Activated CD8-positive, alpha-beta memory T cell treated with anti-CD3 and anti-CD28 coated beads, Interleukin-2, amount 10 ng/mL, durations not matched to agents 7 days and 5 days (primary cell): ENCODE measurements at regions of chr19 and their contacts with region 1.

Region 1: GRCh38 chr19:40806488-40807468 is 7.8 kb downstream of the EGLN2 start:
- DNase-seq: peak; percentile 87
- ATAC-seq: peak; percentile 54
- H3K4me3 Mint-ChIP-seq: peak overlapping the region; percentile 31
- H3K27ac Mint-ChIP-seq: peak overlapping the region; percentile 89
- H3K4me1 Mint-ChIP-seq: peaks cover 83% of the 10 kb centered on the region
- H3K27me3 Mint-ChIP-seq: peaks cover 4% of the 10 kb centered on the region

Region 2: GRCh38 chr19:40662921-40663694 is 143.7 kb before region 1 on chr19:
- CTCF ChIA-PET with region 1: interaction called, 20 read pairs
- DNase-seq: peak; percentile 92
- ATAC-seq: peak; percentile 92
- H3K4me3 Mint-ChIP-seq: peak overlapping the region; percentile 72
- H3K27ac Mint-ChIP-seq: peak overlapping the region; percentile 56
- H3K4me1 Mint-ChIP-seq: peaks cover 22% of the 10 kb centered on the region
- H3K27me3 Mint-ChIP-seq: no peaks in the 10 kb centered on the region

Region 3: GRCh38 chr19:40777937-40778705 is 28.7 kb before region 1 on chr19 and contains the start of gene RAB4B:
- CTCF ChIA-PET with region 1: interaction called, 47 read pairs
- DNase-seq: peak; percentile 100
- ATAC-seq: peak; percentile 81
- H3K4me3 Mint-ChIP-seq: peak within 1 kb of the TSS; percentile 87
- H3K27ac Mint-ChIP-seq: peak within 1 kb of the TSS; percentile 99
- H3K4me1 Mint-ChIP-seq: peaks cover 33% of the 10 kb centered on the region
- H3K27me3 Mint-ChIP-seq: no peaks in the 10 kb centered on the region
- total RNA-seq, gene RAB4B: 36.2 to 56.7 TPM

Region 4: DNA sequence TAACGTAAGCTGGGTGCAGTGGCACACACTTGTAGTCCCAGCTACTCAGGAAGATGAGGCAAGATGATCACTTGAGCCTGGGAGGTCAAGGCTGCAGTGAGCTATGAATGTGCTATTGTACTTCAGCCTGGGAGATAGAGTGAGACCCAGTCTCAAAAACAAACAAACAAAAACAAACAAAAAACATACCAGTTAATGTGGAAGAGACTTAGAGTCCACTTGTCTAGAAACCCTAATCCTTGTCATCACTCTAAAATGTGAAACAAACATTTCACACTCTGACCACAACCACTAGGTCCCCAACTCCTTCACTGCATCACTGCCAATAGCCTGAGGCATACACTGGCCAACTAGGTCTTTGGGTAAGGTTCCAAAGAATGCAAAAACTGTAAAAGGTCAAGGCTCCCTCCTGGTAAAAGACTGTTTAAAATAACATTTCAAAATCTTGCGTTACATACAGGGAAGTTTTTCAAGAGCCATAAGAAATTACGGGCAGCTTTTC is 155.7 kb after region 1 on chr19:
- CTCF ChIA-PET with region 1: no interaction called
- DNase-seq: no peak
- ATAC-seq: no peak
- H3K4me3 Mint-ChIP-seq: no peak overlapping the region
- H3K27ac Mint-ChIP-seq: no peak overlapping the region
- H3K4me1 Mint-ChIP-seq: peaks cover 8% of the 10 kb centered on the region
- H3K27me3 Mint-ChIP-seq: peaks cover 26% of the 10 kb centered on the region